ENCODE measurements at regions of chr3 and their contacts with region 1.

Region 1: DNA sequence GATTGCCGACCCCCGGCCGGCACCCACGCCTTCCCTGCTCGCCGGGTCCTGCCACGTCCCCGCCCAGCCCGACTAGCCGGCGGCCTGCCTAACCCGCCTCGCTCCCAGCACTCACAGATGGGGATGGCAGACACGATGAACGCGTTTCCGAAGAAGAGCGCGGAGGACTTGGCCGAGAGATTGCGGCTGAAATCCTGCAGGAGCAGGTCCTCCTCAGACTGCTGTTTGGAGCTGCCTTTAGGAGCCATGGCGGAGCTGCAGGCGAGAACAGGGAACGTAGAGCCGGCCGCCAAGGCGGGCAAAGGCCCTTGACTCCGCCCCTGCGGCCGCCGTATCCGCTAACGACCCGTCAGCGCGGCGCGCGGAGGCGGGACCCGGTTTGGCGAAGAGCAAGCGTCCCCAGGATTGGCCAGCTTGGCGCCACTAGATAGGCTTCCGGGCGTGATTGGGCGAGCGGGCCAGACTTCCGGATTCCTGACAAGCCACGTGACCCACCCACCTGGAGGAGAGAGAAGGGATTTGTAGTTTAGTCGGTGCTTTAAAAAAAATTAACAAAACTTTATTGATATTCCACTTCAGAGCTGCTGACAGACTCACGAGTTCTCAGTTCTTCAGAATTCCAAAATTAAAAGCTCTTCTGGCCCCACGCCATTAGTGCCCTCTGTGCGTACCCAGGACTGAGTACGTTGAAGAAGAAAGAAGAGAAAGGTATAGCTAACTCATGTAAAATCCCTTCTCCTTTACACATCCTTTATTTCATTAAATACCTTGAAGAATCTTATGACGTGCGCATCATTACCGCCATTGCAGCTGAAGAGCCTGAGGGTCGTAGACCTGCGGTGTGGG is at the start of gene SSR3:
- DNase-seq: peak; percentile 95 to 100 (median 98)
- ATAC-seq: peak; percentile 98
- H3K4me3 ChIP-seq: peak within 1 kb of the TSS; percentile 65
- H3K4me3 Mint-ChIP-seq: peak within 1 kb of the TSS; percentile 97
- H3K27ac ChIP-seq: peak within 1 kb of the TSS; percentile 48 to 76
- H3K27ac Mint-ChIP-seq: peak within 1 kb of the TSS; percentile 90
- H3K4me1 ChIP-seq: peaks cover 19% of the 10 kb centered on the region
- H3K4me1 Mint-ChIP-seq: peaks cover 52% of the 10 kb centered on the region
- H3K27me3 ChIP-seq: no peaks in the 10 kb centered on the region
- H3K27me3 Mint-ChIP-seq: peaks cover 5% of the 10 kb centered on the region
- CTCF ChIP-seq: no peak
- total RNA-seq, gene SSR3: 78.8 to 79.5 TPM

Region 2: GRCh38 chr3:156483961-156484787 is 70.9 kb before region 1 on chr3:
- CTCF ChIA-PET with region 1: no interaction called
- POLR2A ChIA-PET with region 1: interaction called, 21 read pairs
- intact Hi-C with region 1: no loop called
- DNase-seq: peak; percentile 10 to 86 (median 36)
- ATAC-seq: peak; percentile 84
- H3K4me3 ChIP-seq: peak overlapping the region; percentile 31
- H3K4me3 Mint-ChIP-seq: peak overlapping the region; percentile 20
- H3K27ac ChIP-seq: peak overlapping the region; percentile 66 to 75
- H3K27ac Mint-ChIP-seq: peak overlapping the region; percentile 80
- H3K4me1 ChIP-seq: peaks cover 16% of the 10 kb centered on the region
- H3K4me1 Mint-ChIP-seq: peaks cover 40% of the 10 kb centered on the region
- H3K27me3 ChIP-seq: no peaks in the 10 kb centered on the region
- H3K27me3 Mint-ChIP-seq: no peaks in the 10 kb centered on the region
- CTCF ChIP-seq: no peak

Region 3: GRCh38 chr3:156816800-156817645 is 262.0 kb after region 1 on chr3:
- CTCF ChIA-PET with region 1: no interaction called
- POLR2A ChIA-PET with region 1: interaction called, 18 read pairs
- intact Hi-C with region 1: loop called in 1 of 2 experiments (anchors 10 kb)
- DNase-seq: peak; percentile 66 to 97 (median 84)
- ATAC-seq: peak; percentile 81
- H3K4me3 ChIP-seq: peak overlapping the region; percentile 74
- H3K4me3 Mint-ChIP-seq: peak overlapping the region; percentile 93
- H3K27ac ChIP-seq: peak overlapping the region; percentile 65 to 74
- H3K27ac Mint-ChIP-seq: peak overlapping the region; percentile 89
- H3K4me1 ChIP-seq: peaks cover 24% of the 10 kb centered on the region
- H3K4me1 Mint-ChIP-seq: peaks cover 38% of the 10 kb centered on the region
- H3K27me3 ChIP-seq: no peaks in the 10 kb centered on the region
- H3K27me3 Mint-ChIP-seq: no peaks in the 10 kb centered on the region
- CTCF ChIP-seq: no peak

Region 4: DNA sequence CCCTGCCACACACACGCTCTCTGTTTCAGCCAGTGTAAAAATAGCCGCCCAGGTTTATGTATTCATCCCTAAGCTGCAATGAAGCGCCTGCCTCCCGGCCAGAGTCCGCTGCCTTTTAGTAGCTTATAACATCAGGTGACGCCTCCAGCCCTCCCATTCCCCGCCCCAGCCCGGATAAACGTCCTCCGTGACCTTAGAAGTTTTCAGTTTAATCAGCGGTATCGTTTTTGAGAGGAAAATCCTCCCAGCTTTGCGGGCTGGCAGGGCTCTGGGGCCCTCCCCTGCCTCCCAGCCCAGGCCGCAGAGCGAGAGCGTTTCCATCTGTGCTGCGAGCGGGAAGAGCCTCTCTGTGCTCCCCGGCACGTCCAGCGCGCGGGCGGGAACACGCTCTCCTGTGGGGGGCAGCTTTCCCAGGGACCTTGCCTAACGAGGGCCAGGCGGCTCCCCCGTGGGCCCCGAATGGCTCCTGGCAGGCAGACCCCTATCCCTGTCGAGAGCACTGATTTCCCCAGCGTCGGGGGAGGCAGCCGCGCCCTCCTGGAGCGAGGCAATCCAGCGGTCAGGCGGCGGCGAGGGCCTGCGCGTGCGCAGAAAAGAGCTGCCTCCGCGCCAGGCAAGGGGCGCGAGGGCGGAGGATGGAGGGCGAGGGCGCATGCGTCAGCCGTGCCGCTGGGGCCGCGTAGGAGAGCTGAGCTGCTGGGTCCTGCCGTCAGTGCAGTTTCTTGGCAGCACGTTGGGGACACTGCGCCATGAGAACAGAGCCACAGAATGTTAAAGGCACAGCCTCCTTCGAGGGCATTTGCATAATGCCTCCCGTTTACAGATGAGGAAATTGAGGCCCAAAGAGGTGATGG is 533.8 kb after region 1 on chr3:
- CTCF ChIA-PET with region 1: interaction called, 4 read pairs
- POLR2A ChIA-PET with region 1: interaction called, 46 read pairs
- intact Hi-C with region 1: loop called (anchors 5 kb)
- DNase-seq: peak; percentile 88 to 97 (median 92)
- ATAC-seq: peak; percentile 83
- H3K4me3 ChIP-seq: peak overlapping the region; percentile 71
- H3K4me3 Mint-ChIP-seq: peak overlapping the region; percentile 90
- H3K27ac ChIP-seq: peak overlapping the region; percentile 92 to 93
- H3K27ac Mint-ChIP-seq: peak overlapping the region; percentile 99
- H3K4me1 ChIP-seq: peaks cover 31% of the 10 kb centered on the region
- H3K4me1 Mint-ChIP-seq: peaks cover 20% of the 10 kb centered on the region
- H3K27me3 ChIP-seq: no peaks in the 10 kb centered on the region
- H3K27me3 Mint-ChIP-seq: no peaks in the 10 kb centered on the region
- CTCF ChIP-seq: peak; percentile 14

Region 5: GRCh38 chr3:157136647-157137387 is 581.8 kb after region 1 on chr3:
- CTCF ChIA-PET with region 1: interaction called, 12 read pairs
- POLR2A ChIA-PET with region 1: interaction called, 4 read pairs
- intact Hi-C with region 1: loop called (anchors 2 to 5 kb)
- DNase-seq: no peak
- ATAC-seq: peak; percentile 27
- H3K4me3 ChIP-seq: no peak overlapping the region
- H3K4me3 Mint-ChIP-seq: no peak overlapping the region
- H3K27ac ChIP-seq: no peak overlapping the region
- H3K27ac Mint-ChIP-seq: peak overlapping the region; percentile 74
- H3K4me1 ChIP-seq: peaks cover 47% of the 10 kb centered on the region
- H3K4me1 Mint-ChIP-seq: peaks cover 29% of the 10 kb centered on the region
- H3K27me3 ChIP-seq: no peaks in the 10 kb centered on the region
- H3K27me3 Mint-ChIP-seq: no peaks in the 10 kb centered on the region
- CTCF ChIP-seq: no peak

Region 6: GRCh38 chr3:157174649-157175498 is 619.8 kb after region 1 on chr3:
- CTCF ChIA-PET with region 1: interaction called, 5 read pairs
- POLR2A ChIA-PET with region 1: interaction called, 44 read pairs
- intact Hi-C with region 1: loop called in 1 of 2 experiments (anchors 1 kb)
- DNase-seq: peak; percentile 93 to 100 (median 98)
- ATAC-seq: peak; percentile 91
- H3K4me3 ChIP-seq: peak overlapping the region; percentile 65
- H3K4me3 Mint-ChIP-seq: peak overlapping the region; percentile 92
- H3K27ac ChIP-seq: peak overlapping the region; percentile 96 to 98
- H3K27ac Mint-ChIP-seq: peak overlapping the region; percentile 98
- H3K4me1 ChIP-seq: peaks cover 18% of the 10 kb centered on the region
- H3K4me1 Mint-ChIP-seq: peaks cover 31% of the 10 kb centered on the region
- H3K27me3 ChIP-seq: no peaks in the 10 kb centered on the region
- H3K27me3 Mint-ChIP-seq: no peaks in the 10 kb centered on the region
- CTCF ChIP-seq: no peak

Measured in CD4-positive, alpha-beta T cell (primary cell).